ENCODE measurements at regions of chr4 and their contacts with region 1.

Region 1: DNA sequence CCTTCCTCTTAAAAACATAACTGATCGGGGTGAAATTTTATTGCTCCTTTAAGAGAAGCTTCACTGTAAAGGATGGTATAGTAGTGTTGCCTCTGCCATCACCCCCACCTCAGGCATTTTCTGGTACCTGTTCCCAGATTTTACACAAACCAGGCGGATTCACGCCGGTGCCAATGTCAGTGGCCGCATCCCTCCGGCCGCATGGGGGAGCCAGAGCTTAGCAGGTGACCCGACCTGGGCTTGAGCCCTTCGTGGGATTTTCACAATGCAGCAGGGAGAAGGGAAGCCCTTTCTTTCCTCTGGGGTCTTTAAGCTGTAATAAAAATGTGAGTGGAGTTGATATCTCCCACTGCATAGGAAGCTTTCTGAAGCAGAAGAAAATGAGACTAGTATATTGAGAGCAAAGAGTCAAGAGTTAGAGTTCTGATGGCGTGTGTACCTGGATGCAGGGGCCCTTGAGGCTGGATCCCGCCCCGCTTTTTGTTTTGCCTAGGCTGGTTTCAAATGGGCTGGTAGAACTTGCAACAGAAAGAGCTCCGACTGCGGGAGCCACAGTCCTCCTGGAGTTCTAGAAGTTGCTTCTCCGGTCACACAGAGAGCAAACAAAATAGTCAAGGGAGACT is 59.4 kb downstream of the POLR2B start:
- DNase-seq: peak; percentile 72
- H3K4me3 ChIP-seq: 0 out of 4 replicates have a peak overlapping the region, but pooled peaks of 1 of the 2 experiments have one; percentile 27
- H3K27ac ChIP-seq: peak overlapping the region in 1 of 2 experiments; percentile 16; a peak in 1 of 4 replicates
- H3K4me1 ChIP-seq: peaks cover 0 to 12% of the 10 kb centered on the region in 2 experiments; a peak in 2 of 4 replicates
- H3K27me3 ChIP-seq: no peaks in the 10 kb centered on the region
- CTCF ChIP-seq: peak; percentile 97
- EP300 ChIP-seq: no peak
- RAD21 ChIP-seq: peak; percentile 98

Region 2: GRCh38 chr4:57020467-57021101 is 17.5 kb before region 1 on chr4:
- CTCF ChIA-PET with region 1: interaction called, 34 read pairs
- POLR2A ChIA-PET with region 1: no interaction called
- DNase-seq: no peak
- H3K4me3 ChIP-seq: no peak overlapping the region
- H3K27ac ChIP-seq: peak overlapping the region in 1 of 2 experiments; percentile 68; a peak in 2 of 4 replicates
- H3K4me1 ChIP-seq: peaks cover 0 to 4% of the 10 kb centered on the region in 2 experiments; a peak in 1 of 4 replicates
- H3K27me3 ChIP-seq: no peaks in the 10 kb centered on the region
- CTCF ChIP-seq: no peak
- EP300 ChIP-seq: no peak
- RAD21 ChIP-seq: no peak

Region 3: GRCh38 chr4:57064811-57065711 is 27.0 kb after region 1 on chr4:
- CTCF ChIA-PET with region 1: interaction called, 17 read pairs
- POLR2A ChIA-PET with region 1: no interaction called
- DNase-seq: peak; percentile 50
- H3K4me3 ChIP-seq: no peak overlapping the region
- H3K27ac ChIP-seq: peak overlapping the region; percentile 70 to 92; a peak in 3 of 4 replicates
- H3K4me1 ChIP-seq: peaks cover 15 to 17% of the 10 kb centered on the region in 2 experiments
- H3K27me3 ChIP-seq: no peaks in the 10 kb centered on the region
- CTCF ChIP-seq: no peak
- EP300 ChIP-seq: no peak
- RAD21 ChIP-seq: no peak

Region 4: GRCh38 chr4:57102050-57102624 is 64.0 kb after region 1 on chr4:
- CTCF ChIA-PET with region 1: interaction called, 16 read pairs
- POLR2A ChIA-PET with region 1: no interaction called
- DNase-seq: no peak
- H3K4me3 ChIP-seq: no peak overlapping the region
- H3K27ac ChIP-seq: peak overlapping the region; percentile 59 to 84
- H3K4me1 ChIP-seq: peaks cover 11 to 29% of the 10 kb centered on the region in 2 experiments; a peak in 3 of 4 replicates
- H3K27me3 ChIP-seq: no peaks in the 10 kb centered on the region
- CTCF ChIP-seq: no peak
- EP300 ChIP-seq: no peak
- RAD21 ChIP-seq: no peak

Region 5: DNA sequence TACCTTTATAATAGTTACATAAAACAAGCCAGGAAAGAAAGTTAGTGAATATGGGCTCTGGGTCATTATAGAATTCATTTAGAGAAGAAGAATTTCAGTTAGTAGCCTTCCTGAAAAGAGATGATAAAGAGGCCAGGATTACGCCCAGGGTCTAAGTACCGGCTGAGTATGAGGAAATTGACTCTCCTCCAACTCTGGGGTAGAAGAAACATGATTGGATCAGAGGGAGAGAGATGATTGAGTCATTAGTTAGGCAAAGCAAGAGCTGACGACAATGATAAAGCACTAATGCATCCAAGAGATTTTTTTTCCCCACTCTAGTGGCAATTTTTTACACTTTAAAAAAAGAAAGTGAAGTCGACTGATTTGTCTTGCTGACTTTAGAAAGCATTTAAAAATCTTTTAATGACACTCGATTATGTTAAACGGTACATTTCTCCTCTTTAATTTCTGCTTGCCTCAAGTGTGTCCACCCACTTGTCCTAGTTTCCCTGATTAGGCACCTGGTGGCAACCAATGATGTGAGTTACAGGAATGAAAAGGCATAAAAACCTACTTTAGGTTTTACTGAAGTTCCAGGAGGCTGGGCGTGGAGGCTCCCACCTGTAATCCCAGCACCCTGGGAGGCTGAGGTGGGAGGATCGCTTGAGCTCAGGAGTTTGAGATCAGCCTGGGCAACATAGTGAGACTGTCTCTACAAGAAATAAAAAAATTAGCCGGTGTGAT is 109.4 kb after region 1 on chr4:
- CTCF ChIA-PET with region 1: interaction called, 21 read pairs
- POLR2A ChIA-PET with region 1: no interaction called
- DNase-seq: no peak
- H3K4me3 ChIP-seq: no peak overlapping the region
- H3K27ac ChIP-seq: peak overlapping the region in 1 of 2 experiments; percentile 90; a peak in 2 of 4 replicates
- H3K4me1 ChIP-seq: peaks cover 0 to 35% of the 10 kb centered on the region in 2 experiments; a peak in 2 of 4 replicates
- H3K27me3 ChIP-seq: no peaks in the 10 kb centered on the region
- CTCF ChIP-seq: no peak
- EP300 ChIP-seq: no peak
- RAD21 ChIP-seq: no peak

Region 6: DNA sequence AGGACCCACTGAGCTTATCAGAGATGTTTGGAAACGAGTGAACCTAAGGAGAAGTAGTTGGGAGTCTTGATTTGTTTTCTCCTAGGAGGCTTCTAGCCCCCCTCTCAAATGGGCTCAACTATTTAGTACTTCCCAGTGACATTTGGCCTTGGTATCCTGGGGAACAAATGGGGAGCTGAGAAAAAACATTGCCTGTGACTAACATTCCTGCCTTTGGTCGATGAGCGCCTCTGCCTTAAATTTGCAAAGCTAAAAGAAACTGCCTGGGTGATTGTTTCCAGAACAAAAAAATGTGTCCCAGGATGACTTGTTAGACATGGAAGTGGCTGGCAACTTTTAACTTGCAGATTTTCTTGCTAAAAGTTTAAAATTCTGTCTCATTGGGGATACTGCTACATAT is 130.9 kb after region 1 on chr4:
- CTCF ChIA-PET with region 1: interaction called, 139 read pairs
- POLR2A ChIA-PET with region 1: no interaction called
- DNase-seq: no peak
- H3K4me3 ChIP-seq: no peak overlapping the region
- H3K27ac ChIP-seq: no peak overlapping the region
- H3K4me1 ChIP-seq: peaks cover 0 to 6% of the 10 kb centered on the region in 2 experiments; a peak in 2 of 4 replicates
- H3K27me3 ChIP-seq: no peaks in the 10 kb centered on the region
- CTCF ChIP-seq: no peak
- EP300 ChIP-seq: no peak
- RAD21 ChIP-seq: no peak

Region 7: GRCh38 chr4:57553728-57554127 is 515.6 kb after region 1 on chr4:
- CTCF ChIA-PET with region 1: no interaction called
- POLR2A ChIA-PET with region 1: no interaction called
- DNase-seq: no peak
- H3K4me3 ChIP-seq: no peak overlapping the region
- H3K27ac ChIP-seq: no peak overlapping the region
- H3K4me1 ChIP-seq: no peaks in the 10 kb centered on the region; a peak in 1 of 4 replicates
- H3K27me3 ChIP-seq: no peaks in the 10 kb centered on the region
- CTCF ChIP-seq: no peak
- EP300 ChIP-seq: no peak
- RAD21 ChIP-seq: peak; percentile 56

Measured in SK-N-SH (cell line).